Motor neuron (in vitro differentiated cells): ENCODE measurements at regions of chr9 and their contacts with region 1.

Region 1: GRCh38 chr9:119968836-119969707 is 599.8 kb upstream of the BRINP1 start:
- ATAC-seq: peak; percentile 92 to 99 (median 95)
- H3K4me3 ChIP-seq: no peak overlapping the region
- H3K27ac ChIP-seq: no peak overlapping the region
- H3K4me1 ChIP-seq: peaks cover 0 to 3% of the 10 kb centered on the region in 2 donors

Region 2: GRCh38 chr9:119453490-119453911 is 515.6 kb before region 1 on chr9:
- in situ Hi-C with region 1: no loop called
- ATAC-seq: peak in 2 of 8 experiments; percentile 70 to 82
- H3K4me3 ChIP-seq: no peak overlapping the region
- H3K27ac ChIP-seq: no peak overlapping the region
- H3K4me1 ChIP-seq: no peaks in the 10 kb centered on the region

Region 3: DNA sequence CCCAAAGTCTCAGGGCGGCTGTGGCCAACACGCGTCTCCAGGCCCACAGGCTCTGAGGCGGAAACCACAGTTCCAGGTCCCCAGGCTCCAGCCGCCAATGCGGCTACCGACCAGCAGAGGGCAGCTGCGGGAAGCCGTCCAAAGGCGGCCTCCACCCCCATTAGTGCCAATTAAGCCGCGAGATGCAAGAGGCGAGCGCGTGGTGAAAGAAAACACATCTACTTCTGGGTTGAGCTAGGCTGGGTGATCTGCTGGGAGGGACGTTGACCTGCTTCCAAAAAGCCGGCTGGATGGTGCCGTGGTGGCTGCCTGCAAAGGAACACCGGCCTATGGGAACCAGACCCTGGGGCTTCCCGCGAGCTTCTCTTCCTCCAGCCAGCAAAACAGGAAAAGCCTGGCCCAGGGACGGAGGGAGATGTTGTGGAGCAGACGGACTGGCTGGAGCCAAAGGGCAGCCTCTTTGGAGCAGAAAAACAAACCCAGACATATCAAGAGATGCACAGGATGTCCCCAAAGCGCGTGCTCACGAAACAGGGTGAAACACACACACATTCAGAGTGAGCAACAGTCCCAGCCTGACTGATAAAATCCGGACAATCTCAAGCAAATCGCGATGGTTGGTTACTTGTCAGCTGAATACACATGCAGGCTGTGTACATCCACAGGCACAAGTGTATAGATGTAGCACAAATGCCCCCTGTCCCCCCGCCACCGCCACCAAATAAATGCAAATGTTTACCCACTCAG is 412.8 kb before region 1 on chr9:
- in situ Hi-C with region 1: loop called in 2 of 9 experiments (anchors 25 kb)
- ATAC-seq: peak; percentile 93 to 99 (median 96)
- H3K4me3 ChIP-seq: peak overlapping the region in 4 of 5 donors; percentile 2 to 21 (median 12)
- H3K27ac ChIP-seq: no peak overlapping the region
- H3K4me1 ChIP-seq: peaks cover 3 to 4% of the 10 kb centered on the region in 2 donors

Region 4: GRCh38 chr9:120366646-120367019 is 397.6 kb after region 1 on chr9:
- in situ Hi-C with region 1: loop called in 1 of 9 experiments (anchors 25 kb)
- ATAC-seq: peak in 3 of 8 experiments; percentile 45 to 82 (median 63)
- H3K4me3 ChIP-seq: no peak overlapping the region
- H3K27ac ChIP-seq: no peak overlapping the region
- H3K4me1 ChIP-seq: no peaks in the 10 kb centered on the region